Mammary epithelial cell (primary cell): ENCODE measurements at regions of chr7 and their contacts with region 1.

Region 1: DNA sequence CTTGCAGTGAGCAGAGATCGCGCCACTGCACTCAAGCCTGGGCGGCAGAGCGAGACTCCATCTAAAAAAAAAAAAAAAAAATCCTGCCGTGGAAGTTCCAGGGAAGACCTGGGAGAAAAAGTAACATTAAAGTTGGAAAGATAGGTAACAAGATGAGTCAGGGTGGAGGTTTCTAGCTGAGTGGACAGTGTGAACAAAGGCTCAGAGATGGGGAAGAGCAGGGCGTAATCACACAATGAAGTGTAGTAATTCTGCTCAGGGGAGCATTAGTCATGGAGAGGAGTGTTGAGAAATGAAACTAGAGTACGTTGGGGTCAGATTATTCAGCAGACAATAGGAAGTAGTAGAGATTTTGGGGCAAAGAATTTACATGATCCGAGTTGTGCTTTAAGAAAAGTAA is 21.6 kb upstream of the WASL start:
- DNase-seq: peak; percentile 97
- H3K4me3 ChIP-seq: no peak overlapping the region
- H3K27ac ChIP-seq: peak overlapping the region; percentile 88
- H3K4me1 ChIP-seq: peaks cover 43% of the 10 kb centered on the region
- H3K27me3 ChIP-seq: no peaks in the 10 kb centered on the region
- CTCF ChIP-seq: no peak

Region 2: GRCh38 chr7:123220396-123220795 is 550.0 kb before region 1 on chr7:
- CTCF ChIA-PET with region 1: no interaction called
- dilution Hi-C with region 1: no loop called
- in situ Hi-C with region 1: no loop called
- intact Hi-C with region 1: no loop called
- DNase-seq: no peak
- H3K4me3 ChIP-seq: no peak overlapping the region
- H3K27ac ChIP-seq: no peak overlapping the region
- H3K4me1 ChIP-seq: no peaks in the 10 kb centered on the region
- H3K27me3 ChIP-seq: no peaks in the 10 kb centered on the region
- CTCF ChIP-seq: no peak

Region 3: GRCh38 chr7:123455965-123456470 is 314.4 kb before region 1 on chr7:
- CTCF ChIA-PET with region 1: no interaction called
- dilution Hi-C with region 1: no loop called
- in situ Hi-C with region 1: no loop called
- intact Hi-C with region 1: no loop called
- DNase-seq: no peak
- H3K4me3 ChIP-seq: no peak overlapping the region
- H3K27ac ChIP-seq: no peak overlapping the region
- H3K4me1 ChIP-seq: no peaks in the 10 kb centered on the region
- H3K27me3 ChIP-seq: no peaks in the 10 kb centered on the region
- CTCF ChIP-seq: no peak

Region 4: GRCh38 chr7:123601530-123601929 is 168.8 kb before region 1 on chr7 and contains the start of gene ASB15:
- CTCF ChIA-PET with region 1: no interaction called
- dilution Hi-C with region 1: no loop called
- in situ Hi-C with region 1: no loop called
- intact Hi-C with region 1: no loop called
- DNase-seq: no peak
- H3K4me3 ChIP-seq: no peak within 1 kb of the TSS
- H3K27ac ChIP-seq: no peak within 1 kb of the TSS
- H3K4me1 ChIP-seq: no peaks in the 10 kb centered on the region
- H3K27me3 ChIP-seq: no peaks in the 10 kb centered on the region
- CTCF ChIP-seq: no peak
- total RNA-seq, gene ASB15: not detected

Region 5: GRCh38 chr7:123757095-123757494 is 13.3 kb before region 1 on chr7:
- CTCF ChIA-PET with region 1: no interaction called
- dilution Hi-C with region 1: no loop called
- in situ Hi-C with region 1: no loop called
- intact Hi-C with region 1: loop called (anchors 1 kb)
- DNase-seq: peak; percentile 96
- H3K4me3 ChIP-seq: no peak overlapping the region
- H3K27ac ChIP-seq: peak overlapping the region; percentile 84
- H3K4me1 ChIP-seq: peaks cover 36% of the 10 kb centered on the region
- H3K27me3 ChIP-seq: no peaks in the 10 kb centered on the region
- CTCF ChIP-seq: no peak

Region 6: DNA sequence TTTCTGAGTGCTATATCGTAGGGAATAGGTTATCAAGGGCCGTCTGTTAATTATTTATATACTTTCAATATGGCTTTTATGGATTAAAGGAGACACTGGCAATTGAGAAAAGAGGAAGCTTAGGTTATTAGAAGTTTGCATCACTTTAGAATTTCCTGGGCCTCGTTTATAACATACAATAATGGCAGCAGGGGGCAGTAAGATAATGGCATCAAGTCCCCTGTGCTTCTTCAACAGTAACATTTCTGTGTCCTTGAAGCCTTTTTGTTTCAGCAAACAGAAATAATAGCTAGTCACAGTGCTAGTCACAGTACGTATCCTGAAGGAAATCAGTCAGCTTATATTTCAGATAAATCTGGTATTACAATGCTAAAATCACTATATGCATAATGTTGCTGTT is 196.6 kb after region 1 on chr7:
- CTCF ChIA-PET with region 1: no interaction called
- dilution Hi-C with region 1: no loop called
- in situ Hi-C with region 1: no loop called
- intact Hi-C with region 1: no loop called
- DNase-seq: no peak
- H3K4me3 ChIP-seq: no peak overlapping the region
- H3K27ac ChIP-seq: no peak overlapping the region
- H3K4me1 ChIP-seq: no peaks in the 10 kb centered on the region
- H3K27me3 ChIP-seq: peaks cover 3% of the 10 kb centered on the region
- CTCF ChIP-seq: peak; percentile 24 to 51